ENCODE measurements at regions of chr4 and their contacts with region 1.

Region 1: DNA sequence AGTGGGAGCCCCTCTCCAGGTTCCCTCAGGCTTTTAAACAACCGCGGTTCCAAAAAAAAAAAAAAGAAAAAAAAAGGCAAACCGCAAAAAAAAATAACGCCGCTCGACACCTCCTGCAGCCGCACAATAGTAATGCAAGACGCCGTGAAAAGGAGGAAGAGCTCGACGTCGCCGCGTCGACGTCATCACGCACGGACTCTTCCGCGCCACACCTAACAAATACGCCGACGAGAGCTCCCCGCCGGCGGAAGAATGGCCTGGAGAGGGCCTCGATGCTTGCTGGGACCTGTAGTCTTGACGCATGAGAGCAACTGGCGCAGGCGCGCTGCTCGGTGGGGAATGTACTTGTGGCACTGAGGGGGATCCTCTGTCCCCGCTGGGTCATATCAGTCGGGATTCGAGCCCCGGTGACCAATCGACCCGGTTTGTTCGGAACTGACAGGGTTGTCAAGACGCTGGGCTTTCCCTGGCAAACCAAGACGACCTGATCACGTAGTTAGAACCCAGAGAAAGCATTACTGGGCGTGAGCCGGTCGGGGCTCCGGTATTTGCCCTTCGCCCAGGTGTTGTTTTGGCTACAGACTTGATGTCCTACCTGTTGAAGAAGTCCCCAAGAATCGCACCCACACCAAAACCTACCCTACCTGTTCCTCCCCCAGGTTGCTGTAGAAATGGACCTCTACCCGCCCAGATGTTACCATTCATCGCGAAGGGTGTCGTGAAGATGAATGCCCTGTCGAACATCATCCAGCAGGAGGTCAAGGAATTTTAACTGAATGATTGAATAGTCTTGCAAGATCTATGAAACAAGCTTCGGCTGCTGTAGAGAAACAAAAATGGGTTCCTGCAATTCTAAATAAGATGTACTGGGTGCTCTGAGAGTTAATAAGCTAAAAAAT is at the start of gene CBR4:
- DNase-seq: peak; percentile 90 to 93
- H3K4me3 ChIP-seq: peak within 1 kb of the TSS; percentile 83
- H3K27ac ChIP-seq: peak within 1 kb of the TSS; percentile 86
- H3K4me1 ChIP-seq: peaks cover 33% of the 10 kb centered on the region
- H3K27me3 ChIP-seq: no peaks in the 10 kb centered on the region
- CTCF ChIP-seq: no peak
- total RNA-seq, gene CBR4: 28.9 and 35.7 TPM in 2 replicates

Region 2: DNA sequence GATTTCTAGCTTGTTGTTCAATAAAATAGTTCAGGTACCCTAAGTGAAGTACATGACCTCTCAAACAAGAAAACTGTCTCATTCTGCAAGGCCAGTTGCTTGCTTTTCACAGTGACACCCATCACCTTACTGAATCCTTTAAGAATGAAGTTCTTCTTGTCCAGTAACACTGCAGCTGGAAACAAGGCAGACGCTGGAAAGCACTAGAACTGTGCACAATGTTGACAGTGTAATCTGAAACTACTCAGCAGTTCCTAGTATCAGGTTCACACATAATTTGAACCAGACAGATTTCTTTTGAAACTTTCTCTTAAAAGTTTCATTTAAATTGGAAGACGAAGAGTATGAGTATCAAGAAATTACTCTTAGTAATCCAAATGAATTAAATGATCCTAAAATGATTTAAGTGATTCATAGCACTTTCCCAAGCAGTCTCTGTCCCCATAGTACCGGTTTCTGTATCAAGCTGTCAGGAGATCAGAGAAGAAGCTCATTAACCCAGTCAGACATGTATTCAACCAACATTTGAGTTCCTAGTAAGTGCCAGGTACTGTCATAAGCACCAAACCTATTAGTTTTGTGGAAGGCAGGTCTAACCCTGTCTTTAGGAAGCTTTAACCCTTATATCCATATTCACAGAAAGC is 450.1 kb before region 1 on chr4:
- CTCF ChIA-PET with region 1: no interaction called
- POLR2A ChIA-PET with region 1: interaction called, 11 read pairs
- intact Hi-C with region 1: no loop called
- DNase-seq: peak; percentile 58 to 86
- H3K4me3 ChIP-seq: no peak overlapping the region
- H3K27ac ChIP-seq: peak overlapping the region; percentile 80
- H3K4me1 ChIP-seq: peaks cover 47% of the 10 kb centered on the region
- H3K27me3 ChIP-seq: no peaks in the 10 kb centered on the region
- CTCF ChIP-seq: no peak

Region 3: GRCh38 chr4:168923526-168924194 is 86.7 kb before region 1 on chr4:
- CTCF ChIA-PET with region 1: interaction called, 7 read pairs
- POLR2A ChIA-PET with region 1: interaction called, 14 read pairs
- intact Hi-C with region 1: loop called (anchors 1 kb)
- DNase-seq: peak; percentile 30 to 39
- H3K4me3 ChIP-seq: no peak overlapping the region
- H3K27ac ChIP-seq: no peak overlapping the region
- H3K4me1 ChIP-seq: no peaks in the 10 kb centered on the region
- H3K27me3 ChIP-seq: no peaks in the 10 kb centered on the region
- CTCF ChIP-seq: peak; percentile 73

Region 4: DNA sequence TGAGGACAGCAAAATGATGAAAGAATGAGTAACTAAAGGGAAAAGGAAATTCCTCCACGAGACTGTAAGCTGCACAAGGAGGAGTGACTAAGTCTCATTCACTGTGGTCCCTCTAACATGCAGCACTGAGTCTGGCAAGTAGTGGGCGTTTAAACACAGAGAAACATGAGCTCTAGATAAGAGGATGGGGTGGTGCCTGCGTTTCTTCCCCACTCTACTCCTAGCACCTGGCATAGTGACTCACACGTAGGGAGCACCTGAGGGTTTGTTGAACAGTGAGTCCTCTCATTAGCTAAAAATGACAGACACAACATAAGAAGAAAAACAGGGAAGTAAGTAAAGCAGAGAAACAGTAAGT is 105.5 kb after region 1 on chr4:
- CTCF ChIA-PET with region 1: no interaction called
- POLR2A ChIA-PET with region 1: interaction called, 10 read pairs
- intact Hi-C with region 1: no loop called
- DNase-seq: peak; percentile 78 to 93
- H3K4me3 ChIP-seq: no peak overlapping the region
- H3K27ac ChIP-seq: peak overlapping the region; percentile 98
- H3K4me1 ChIP-seq: peaks cover 25% of the 10 kb centered on the region
- H3K27me3 ChIP-seq: no peaks in the 10 kb centered on the region
- CTCF ChIP-seq: peak; percentile 49; the same call in 1 of the 2 replicates

Region 5: DNA sequence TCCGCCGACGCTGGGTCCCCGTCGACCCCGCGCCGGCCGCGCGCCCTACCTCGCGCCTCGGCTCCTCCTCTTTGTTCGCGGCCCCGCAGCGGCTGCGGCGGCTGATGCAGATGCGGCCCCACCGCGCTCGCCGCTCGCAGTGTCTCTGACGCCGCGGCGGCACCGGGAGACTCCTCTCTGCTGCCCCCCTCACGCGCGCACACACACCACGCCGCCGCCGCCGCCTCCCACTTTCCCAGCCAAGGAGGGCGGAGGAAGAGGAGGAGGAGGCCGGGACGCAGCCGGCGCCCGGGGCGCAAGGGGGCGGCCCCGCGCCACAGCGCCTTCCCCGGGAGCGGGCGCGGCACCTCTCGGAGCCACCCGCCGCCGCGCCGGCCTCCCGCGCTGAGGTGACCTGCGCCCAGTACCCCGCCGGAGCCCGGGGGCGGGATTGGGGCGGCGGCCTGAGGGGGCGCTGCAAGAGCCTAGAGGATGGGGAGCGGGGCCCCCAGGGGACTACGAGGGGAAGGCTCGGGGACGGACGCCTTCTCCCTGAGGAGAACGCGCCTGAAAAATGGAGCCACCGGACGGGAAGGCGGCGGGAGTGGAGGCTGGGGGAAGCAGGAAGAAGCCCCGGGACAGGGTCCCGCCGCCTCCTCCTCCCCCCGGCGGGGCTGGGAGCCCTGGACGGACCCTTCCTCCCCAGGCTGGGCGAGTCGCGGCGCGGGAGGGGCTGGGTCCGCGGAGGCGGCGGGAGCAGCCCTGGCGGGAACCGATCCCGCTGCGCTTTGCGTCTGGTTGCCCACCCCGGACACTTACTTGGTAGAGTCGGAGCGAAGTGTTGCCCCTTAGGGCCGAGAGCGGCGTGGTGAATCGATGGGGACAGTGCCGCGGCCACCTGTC is 260.7 kb after region 1 on chr4 and contains the start of gene SH3RF1:
- CTCF ChIA-PET with region 1: no interaction called
- POLR2A ChIA-PET with region 1: interaction called, 60 read pairs
- intact Hi-C with region 1: loop called (anchors 5 kb)
- DNase-seq: peak; percentile 60 to 91
- H3K4me3 ChIP-seq: peak within 1 kb of the TSS; percentile 91
- H3K27ac ChIP-seq: peak within 1 kb of the TSS; percentile 66
- H3K4me1 ChIP-seq: peaks cover 39% of the 10 kb centered on the region
- H3K27me3 ChIP-seq: no peaks in the 10 kb centered on the region
- CTCF ChIP-seq: no peak; the same call in 1 of the 2 replicates
- total RNA-seq, gene SH3RF1: 26.4 and 37.4 TPM in 2 replicates

Region 6: DNA sequence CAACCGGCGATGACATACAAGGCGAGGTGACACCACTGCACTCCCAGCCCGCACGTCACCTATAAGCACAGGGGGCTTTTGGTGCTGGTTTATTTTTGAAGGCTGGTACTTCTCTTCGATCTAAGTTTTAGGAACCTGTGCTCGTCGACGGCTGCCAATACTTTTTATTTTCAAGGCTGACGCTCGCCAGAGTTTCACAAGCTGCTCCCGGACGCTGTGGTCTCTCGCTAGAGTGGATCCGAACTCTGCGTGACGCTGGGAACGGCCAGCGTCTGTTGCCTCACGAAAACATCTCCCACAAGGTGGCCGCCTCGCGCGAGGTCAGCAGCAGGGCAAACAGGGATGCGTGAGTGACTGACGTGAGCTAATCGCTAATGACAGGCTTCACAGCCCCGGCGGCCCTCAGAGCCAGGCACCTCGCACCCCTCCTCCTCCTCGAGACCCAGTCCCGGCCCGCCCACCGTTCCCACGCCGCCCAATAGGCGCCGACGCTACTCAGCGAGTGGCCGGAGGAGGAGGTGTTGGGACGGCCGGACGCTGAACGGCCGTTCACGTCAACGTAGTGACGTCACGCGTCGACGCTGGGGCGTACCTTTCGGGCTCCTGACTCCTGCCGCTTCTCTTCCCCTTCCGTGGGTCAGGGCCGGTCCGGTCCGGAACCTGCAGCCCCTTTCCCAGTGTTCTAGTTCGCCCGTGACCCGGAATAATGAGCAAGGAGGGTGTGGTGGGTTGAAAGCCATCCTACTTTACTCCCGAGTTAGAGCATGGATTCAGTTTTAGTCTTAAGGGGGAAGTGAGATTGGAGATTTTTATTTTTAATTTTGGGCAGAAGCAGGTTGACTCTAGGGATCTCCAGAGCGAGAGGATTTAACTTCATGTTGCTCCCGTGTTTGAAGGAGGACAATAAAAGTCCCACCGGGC is 609.8 kb after region 1 on chr4 and contains the start of gene CLCN3:
- CTCF ChIA-PET with region 1: no interaction called
- POLR2A ChIA-PET with region 1: interaction called, 11 read pairs
- intact Hi-C with region 1: no loop called
- DNase-seq: peak; percentile 87 to 94
- H3K4me3 ChIP-seq: peak within 1 kb of the TSS; percentile 72
- H3K27ac ChIP-seq: peak within 1 kb of the TSS; percentile 85
- H3K4me1 ChIP-seq: peaks cover 18% of the 10 kb centered on the region
- H3K27me3 ChIP-seq: no peaks in the 10 kb centered on the region
- CTCF ChIP-seq: no peak
- total RNA-seq, gene CLCN3: 38.8 and 51.6 TPM in 2 replicates

Region 7: DNA sequence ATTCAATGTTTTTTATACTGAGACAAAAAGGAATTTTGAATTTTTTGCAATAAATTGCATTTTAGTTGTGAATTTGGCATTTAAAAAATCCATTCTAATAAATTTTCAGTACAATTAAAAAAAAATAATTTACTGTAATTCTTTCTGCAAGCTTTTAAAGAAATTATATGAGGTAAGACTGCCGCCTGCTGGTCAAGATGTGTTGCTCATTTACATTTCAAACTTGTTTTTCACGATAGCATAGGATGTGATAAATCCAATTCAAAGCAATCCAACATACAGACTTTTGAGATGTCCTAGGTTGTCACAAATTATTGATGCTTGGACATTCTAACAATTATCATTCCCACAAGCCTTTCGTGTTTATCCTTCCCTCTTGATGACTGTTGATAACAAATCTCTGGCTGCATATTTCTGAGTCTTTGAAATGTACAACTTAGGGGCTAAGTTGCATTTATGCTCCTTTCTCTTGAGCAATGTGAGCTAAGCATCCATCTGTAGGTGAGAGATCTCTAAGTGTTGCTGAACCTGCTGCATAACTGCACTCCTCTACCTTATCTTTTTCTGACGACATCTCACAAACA is 1037.5 kb after region 1 on chr4:
- CTCF ChIA-PET with region 1: no interaction called
- POLR2A ChIA-PET with region 1: interaction called, 12 read pairs
- intact Hi-C with region 1: no loop called
- DNase-seq: peak in 1 of 2 experiments; percentile 41
- H3K4me3 ChIP-seq: no peak overlapping the region
- H3K27ac ChIP-seq: no peak overlapping the region
- H3K4me1 ChIP-seq: no peaks in the 10 kb centered on the region
- H3K27me3 ChIP-seq: no peaks in the 10 kb centered on the region
- CTCF ChIP-seq: peak; percentile 78

Measured in PC-9 (cell line).